A549 (cell line): ENCODE measurements at regions of chr17 and their contacts with region 1.

Region 1: GRCh38 chr17:8479431-8479947 is 43.8 kb downstream of the NDEL1 start:
- DNase-seq: no peak
- ATAC-seq: no peak
- H3K4me3 ChIP-seq: no peak overlapping the region
- H3K27ac ChIP-seq: no peak overlapping the region
- H3K4me1 ChIP-seq: no peaks in the 10 kb centered on the region
- CTCF ChIP-seq: no peak
- EP300 ChIP-seq: no peak
- POLR2A ChIP-seq: no peak
- RAD21 ChIP-seq: no peak

Region 2: DNA sequence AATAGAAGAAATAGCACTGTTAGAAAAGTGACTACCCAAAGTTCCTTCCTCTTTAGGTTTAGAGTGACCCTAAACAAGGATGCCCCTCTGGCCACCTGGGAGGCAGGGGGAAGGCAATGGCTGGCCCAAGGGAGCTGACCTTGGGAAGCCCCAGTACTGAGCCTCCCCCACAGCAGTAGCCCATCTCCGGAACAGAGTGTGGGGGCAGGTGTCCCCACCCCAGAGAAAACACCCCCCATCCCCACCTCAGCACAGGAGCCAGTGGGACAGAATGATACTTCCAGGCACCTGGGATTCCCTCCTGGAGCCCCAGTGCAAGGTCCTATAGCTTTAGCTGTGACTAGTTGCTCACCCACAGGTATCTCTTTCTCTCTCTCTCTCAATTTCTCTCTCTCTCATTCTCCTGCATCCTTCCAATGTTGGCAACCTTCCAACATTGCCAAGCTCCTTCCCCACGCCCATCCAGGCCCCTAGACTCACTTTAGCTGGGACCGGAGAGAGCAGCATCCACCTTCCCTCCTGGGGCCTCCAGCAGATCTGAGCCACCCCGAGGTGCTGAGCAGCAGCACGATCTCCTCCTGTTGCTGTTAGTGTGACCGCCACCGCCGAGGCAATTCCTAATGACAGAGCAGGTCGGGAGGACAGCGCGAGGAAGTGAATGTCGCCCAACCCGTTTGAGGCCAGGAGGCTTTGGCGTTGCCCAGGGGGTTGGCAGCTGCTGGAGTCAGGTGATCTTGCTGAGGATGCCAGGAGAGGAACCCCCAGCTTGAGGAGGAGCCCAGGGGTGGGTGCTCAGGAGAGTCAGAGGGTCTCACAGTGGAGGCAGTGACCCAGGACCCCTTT is 82.1 kb before region 1 on chr17 and contains the start of gene RNF222:
- CTCF ChIA-PET with region 1: no interaction called
- POLR2A ChIA-PET with region 1: no interaction called
- DNase-seq: no peak
- ATAC-seq: peak in 1 of 2 experiments; percentile 5; a peak in 1 of 6 replicates
- H3K4me3 ChIP-seq: no peak within 1 kb of the TSS
- H3K27ac ChIP-seq: no peak within 1 kb of the TSS
- H3K4me1 ChIP-seq: no peaks in the 10 kb centered on the region
- CTCF ChIP-seq: no peak
- EP300 ChIP-seq: no peak
- POLR2A ChIP-seq: no peak
- RAD21 ChIP-seq: no peak
- polyA plus RNA-seq, gene RNF222: not detected in 2 replicates

Region 3: GRCh38 chr17:8489841-8490240 is 10.4 kb after region 1 on chr17:
- CTCF ChIA-PET with region 1: interaction called, 16 read pairs
- POLR2A ChIA-PET with region 1: no interaction called
- DNase-seq: no peak
- ATAC-seq: no peak
- H3K4me3 ChIP-seq: no peak overlapping the region
- H3K27ac ChIP-seq: no peak overlapping the region
- H3K4me1 ChIP-seq: no peaks in the 10 kb centered on the region
- CTCF ChIP-seq: no peak
- EP300 ChIP-seq: no peak
- POLR2A ChIP-seq: no peak
- RAD21 ChIP-seq: no peak